ENCODE measurements at regions of chr9 and their contacts with region 1.

Region 1: DNA sequence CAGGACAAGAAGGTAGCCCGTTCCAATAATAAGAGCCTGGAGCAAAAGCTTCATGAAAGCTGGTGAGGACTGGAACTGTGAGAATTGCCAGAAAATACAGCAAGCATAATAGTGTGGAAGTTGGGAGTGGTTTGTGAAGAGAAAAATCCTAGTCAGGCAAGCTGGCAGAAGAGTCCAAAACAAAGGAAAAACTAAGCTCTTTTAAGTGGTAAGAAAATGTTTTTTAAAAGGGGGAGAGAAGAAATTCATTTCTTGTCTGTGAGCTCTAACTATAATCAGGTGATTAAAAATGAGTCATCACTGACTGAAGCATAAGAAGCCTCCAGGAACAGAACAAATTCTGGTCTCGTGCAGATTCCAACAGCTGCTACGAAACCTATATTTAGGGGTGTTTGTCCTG is 102.6 kb downstream of the CAAP1 start:
- DNase-seq: peak; percentile 1
- ATAC-seq: no peak
- H3K4me3 ChIP-seq: no peak overlapping the region
- H3K27ac ChIP-seq: no peak overlapping the region
- H3K4me1 ChIP-seq: no peaks in the 10 kb centered on the region
- H3K27me3 ChIP-seq: no peaks in the 10 kb centered on the region
- CTCF ChIP-seq: no peak
- POLR2A ChIP-seq: no peak
- RAD21 ChIP-seq: no peak

Region 2: DNA sequence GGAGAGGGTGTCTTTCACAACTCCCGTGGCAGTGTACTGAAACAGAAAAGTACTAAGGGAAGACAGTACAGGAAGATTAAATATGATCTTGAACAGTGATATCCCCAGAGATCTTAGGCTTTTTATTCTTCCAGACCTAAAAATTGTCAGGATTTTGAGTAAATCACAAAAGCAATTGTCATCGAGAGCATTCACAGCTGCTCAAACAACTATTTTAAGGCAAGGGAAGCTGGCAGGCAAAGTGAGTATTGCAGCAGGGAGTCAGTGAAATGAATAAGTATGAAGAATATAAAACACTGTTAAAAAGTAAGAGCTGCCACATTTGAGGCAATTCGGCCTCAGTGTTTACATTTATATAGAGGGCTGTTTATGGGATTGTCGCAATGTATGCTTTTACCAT is 376.3 kb before region 1 on chr9:
- CTCF ChIA-PET with region 1: no interaction called
- POLR2A ChIA-PET with region 1: no interaction called
- dilution Hi-C with region 1: no loop called
- in situ Hi-C with region 1: no loop called
- intact Hi-C with region 1: no loop called
- DNase-seq: no peak
- ATAC-seq: no peak
- H3K4me3 ChIP-seq: no peak overlapping the region
- H3K27ac ChIP-seq: no peak overlapping the region
- H3K4me1 ChIP-seq: no peaks in the 10 kb centered on the region
- H3K27me3 ChIP-seq: no peaks in the 10 kb centered on the region
- CTCF ChIP-seq: no peak
- POLR2A ChIP-seq: no peak
- RAD21 ChIP-seq: no peak

Region 3: DNA sequence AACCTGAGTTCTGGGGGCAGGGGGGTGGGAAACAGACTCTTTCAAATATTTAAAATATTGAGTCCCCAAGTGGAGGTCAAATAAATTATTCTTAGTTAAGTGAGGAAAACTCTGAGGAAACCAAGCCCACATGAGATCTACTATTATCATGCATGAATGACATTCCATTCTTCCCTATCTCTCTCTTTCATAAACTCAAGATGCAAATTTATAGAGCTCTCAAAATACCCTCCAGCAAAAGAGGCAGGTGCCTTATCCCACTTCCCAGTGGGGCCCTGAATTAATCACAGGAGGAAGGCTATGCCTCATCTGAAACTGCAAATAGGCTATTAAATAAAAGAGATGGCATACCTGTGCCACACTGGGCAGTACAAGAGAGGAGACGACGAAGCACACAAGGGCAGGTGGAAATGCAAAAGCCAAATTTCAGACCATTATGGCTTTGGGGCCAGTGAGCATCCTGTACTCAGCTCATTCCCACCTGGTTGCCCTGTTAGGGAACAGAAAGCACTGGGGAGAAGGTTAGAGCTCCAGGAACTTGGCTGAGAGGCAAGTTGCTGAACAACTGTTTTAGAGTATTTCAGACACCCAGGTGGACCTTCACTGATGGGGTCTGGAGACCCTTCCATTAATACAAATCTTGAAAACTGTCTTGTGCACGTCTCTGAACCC is 609.2 kb after region 1 on chr9:
- CTCF ChIA-PET with region 1: no interaction called
- POLR2A ChIA-PET with region 1: interaction called, 10 read pairs
- dilution Hi-C with region 1: no loop called
- in situ Hi-C with region 1: no loop called
- intact Hi-C with region 1: no loop called
- DNase-seq: no peak
- ATAC-seq: no peak
- H3K4me3 ChIP-seq: no peak overlapping the region
- H3K27ac ChIP-seq: no peak overlapping the region
- H3K4me1 ChIP-seq: no peaks in the 10 kb centered on the region
- H3K27me3 ChIP-seq: no peaks in the 10 kb centered on the region
- CTCF ChIP-seq: no peak
- POLR2A ChIP-seq: no peak
- RAD21 ChIP-seq: no peak

Region 4: GRCh38 chr9:27539479-27540441 is 749.8 kb after region 1 on chr9:
- CTCF ChIA-PET with region 1: no interaction called
- POLR2A ChIA-PET with region 1: no interaction called
- dilution Hi-C with region 1: no loop called
- in situ Hi-C with region 1: no loop called
- intact Hi-C with region 1: no loop called
- DNase-seq: peak; percentile 87
- ATAC-seq: peak; percentile 83
- H3K4me3 ChIP-seq: no peak overlapping the region
- H3K27ac ChIP-seq: peak overlapping the region; percentile 60; the same call in 1 of the 2 replicates
- H3K4me1 ChIP-seq: peaks cover 11% of the 10 kb centered on the region
- H3K27me3 ChIP-seq: no peaks in the 10 kb centered on the region
- CTCF ChIP-seq: no peak
- POLR2A ChIP-seq: no peak
- RAD21 ChIP-seq: no peak